ENCODE measurements at regions of chr6 and their contacts with region 1.

Region 1: GRCh38 chr6:159654483-159655098 is 38.5 kb downstream of the SOD2 start:
- DNase-seq: no peak
- H3K4me3 ChIP-seq: no peak overlapping the region
- H3K27ac ChIP-seq: no peak overlapping the region
- H3K4me1 ChIP-seq: no peaks in the 10 kb centered on the region
- H3K27me3 ChIP-seq: no peaks in the 10 kb centered on the region
- CTCF ChIP-seq: peak; percentile 53

Region 2: DNA sequence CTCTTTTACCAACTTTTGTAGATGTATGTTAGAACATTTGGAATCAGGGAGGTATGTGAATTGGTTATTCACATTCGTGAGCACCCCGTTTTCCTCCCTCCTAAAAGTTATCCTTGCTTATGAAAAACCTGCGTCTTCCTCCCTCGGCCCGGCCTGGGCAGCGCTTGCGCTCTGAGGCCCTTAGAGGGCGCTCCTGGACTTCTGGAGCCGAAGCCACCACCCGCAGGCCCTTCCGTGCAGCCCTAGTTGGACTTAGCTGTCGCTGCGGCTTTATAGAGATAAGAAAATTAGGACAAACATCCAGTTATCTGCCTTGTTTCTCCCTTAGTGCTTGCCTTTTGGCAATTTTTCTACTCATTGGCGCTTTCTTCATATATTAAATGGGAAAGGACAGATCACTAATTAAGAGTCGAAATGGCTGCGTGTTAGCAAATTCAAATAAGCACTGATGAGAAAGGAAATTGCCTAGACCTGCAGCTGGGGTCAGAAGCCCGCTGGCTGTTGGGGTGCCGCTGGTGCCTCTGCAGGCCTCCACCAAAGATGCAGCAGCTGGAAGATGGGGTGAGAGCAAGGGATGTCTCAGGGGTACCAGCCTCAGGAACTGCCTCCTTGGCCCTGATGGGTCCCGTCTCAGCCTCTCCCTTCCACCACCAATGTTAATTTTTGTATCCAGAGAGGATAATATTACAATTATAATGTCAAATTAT is 480.2 kb before region 1 on chr6:
- intact Hi-C with region 1: loop called (anchors 2 kb)
- DNase-seq: peak; percentile 60
- H3K4me3 ChIP-seq: no peak overlapping the region
- H3K27ac ChIP-seq: no peak overlapping the region
- H3K4me1 ChIP-seq: no peaks in the 10 kb centered on the region
- H3K27me3 ChIP-seq: peaks cover 31% of the 10 kb centered on the region
- CTCF ChIP-seq: peak; percentile 88

Region 3: DNA sequence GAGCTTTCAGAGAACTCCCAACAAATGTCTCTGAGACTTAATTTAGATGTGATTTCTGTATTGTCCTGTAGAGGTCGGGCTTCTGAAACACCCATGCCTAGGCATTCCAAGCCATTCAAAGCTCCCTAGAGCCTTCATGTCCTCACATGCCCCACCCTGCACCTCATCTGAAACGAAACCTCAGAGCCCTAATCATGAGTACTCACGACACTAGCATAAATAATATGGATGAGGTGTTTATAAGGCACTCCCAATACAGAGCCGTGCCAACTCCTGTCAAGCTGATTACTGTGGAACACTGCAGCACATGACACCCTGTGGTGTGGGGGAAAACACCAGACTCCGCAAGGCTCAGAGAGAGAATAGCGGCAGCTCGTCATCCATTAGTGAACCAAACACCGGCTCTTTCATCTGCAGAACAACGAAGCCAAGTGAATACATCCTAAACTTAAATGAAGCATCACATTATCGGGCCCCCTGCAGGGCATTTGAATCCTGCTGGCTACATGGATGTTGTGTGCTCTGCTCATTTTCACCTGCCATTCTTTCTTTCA is 401.6 kb before region 1 on chr6:
- intact Hi-C with region 1: loop called (anchors 5 kb)
- DNase-seq: no peak
- H3K4me3 ChIP-seq: no peak overlapping the region
- H3K27ac ChIP-seq: no peak overlapping the region
- H3K4me1 ChIP-seq: no peaks in the 10 kb centered on the region
- H3K27me3 ChIP-seq: no peaks in the 10 kb centered on the region
- CTCF ChIP-seq: peak; percentile 35

Region 4: GRCh38 chr6:159852877-159853276 is 198.3 kb after region 1 on chr6:
- intact Hi-C with region 1: no loop called
- DNase-seq: no peak
- H3K4me3 ChIP-seq: no peak overlapping the region
- H3K27ac ChIP-seq: no peak overlapping the region
- H3K4me1 ChIP-seq: no peaks in the 10 kb centered on the region
- H3K27me3 ChIP-seq: no peaks in the 10 kb centered on the region
- CTCF ChIP-seq: peak; percentile 10